ENCODE measurements at regions of chr17 and their contacts with region 1.

Region 1: DNA sequence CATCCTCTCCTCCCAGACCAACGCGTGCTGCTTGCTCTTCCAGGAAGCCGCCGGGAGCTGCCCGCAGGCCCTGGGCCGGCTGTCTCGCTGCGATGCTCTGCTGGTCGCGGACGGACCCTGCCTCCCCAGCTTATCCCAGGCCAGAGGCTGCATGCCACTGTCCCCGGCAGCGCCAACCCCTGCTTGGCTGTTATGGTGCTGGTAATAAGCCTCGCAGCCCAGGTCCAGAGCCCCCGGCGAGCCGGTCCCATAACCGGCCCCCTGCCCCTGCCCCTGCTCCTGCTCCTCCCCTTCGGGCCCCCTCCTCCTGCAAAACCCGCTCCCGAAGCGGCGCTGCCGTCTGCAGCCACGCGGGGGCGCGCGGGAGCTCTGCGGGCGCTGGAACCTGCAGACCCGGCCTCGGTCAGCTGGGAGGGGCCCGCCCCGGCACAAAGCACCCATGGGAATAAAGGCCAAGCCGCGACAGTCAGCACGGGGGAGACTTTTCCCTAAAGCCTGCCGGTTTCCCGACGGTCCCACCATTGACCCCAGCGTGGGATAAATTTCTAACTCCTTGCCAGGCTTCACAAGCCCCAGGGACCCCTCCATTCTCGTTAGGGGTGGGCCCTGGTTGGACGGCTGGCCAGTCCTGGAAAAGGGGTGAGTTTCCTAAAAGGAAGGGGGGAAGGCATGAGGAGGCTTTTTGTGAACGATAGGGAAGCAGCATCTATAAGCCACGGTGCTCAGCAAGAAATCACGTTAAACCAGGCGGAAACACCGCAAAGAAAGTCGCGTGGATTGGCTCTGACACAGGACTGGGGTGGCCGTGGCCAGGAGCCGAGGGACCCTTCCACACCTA is 11.2 kb downstream of the ENPP7 start:
- DNase-seq: peak; percentile 83
- H3K4me3 ChIP-seq: peak overlapping the region; percentile 35
- H3K27ac ChIP-seq: no peak overlapping the region
- H3K4me1 ChIP-seq: peaks cover 12% of the 10 kb centered on the region
- H3K27me3 ChIP-seq: peaks cover 4% of the 10 kb centered on the region
- CTCF ChIP-seq: peak; percentile 98

Region 2: GRCh38 chr17:79400989-79401703 is 340.8 kb before region 1 on chr17:
- CTCF ChIA-PET with region 1: no interaction called
- POLR2A ChIA-PET with region 1: no interaction called
- intact Hi-C with region 1: no loop called
- DNase-seq: peak; percentile 71
- H3K4me3 ChIP-seq: no peak overlapping the region
- H3K27ac ChIP-seq: no peak overlapping the region
- H3K4me1 ChIP-seq: no peaks in the 10 kb centered on the region
- H3K27me3 ChIP-seq: peaks cover 72% of the 10 kb centered on the region
- CTCF ChIP-seq: peak; percentile 89

Region 3: DNA sequence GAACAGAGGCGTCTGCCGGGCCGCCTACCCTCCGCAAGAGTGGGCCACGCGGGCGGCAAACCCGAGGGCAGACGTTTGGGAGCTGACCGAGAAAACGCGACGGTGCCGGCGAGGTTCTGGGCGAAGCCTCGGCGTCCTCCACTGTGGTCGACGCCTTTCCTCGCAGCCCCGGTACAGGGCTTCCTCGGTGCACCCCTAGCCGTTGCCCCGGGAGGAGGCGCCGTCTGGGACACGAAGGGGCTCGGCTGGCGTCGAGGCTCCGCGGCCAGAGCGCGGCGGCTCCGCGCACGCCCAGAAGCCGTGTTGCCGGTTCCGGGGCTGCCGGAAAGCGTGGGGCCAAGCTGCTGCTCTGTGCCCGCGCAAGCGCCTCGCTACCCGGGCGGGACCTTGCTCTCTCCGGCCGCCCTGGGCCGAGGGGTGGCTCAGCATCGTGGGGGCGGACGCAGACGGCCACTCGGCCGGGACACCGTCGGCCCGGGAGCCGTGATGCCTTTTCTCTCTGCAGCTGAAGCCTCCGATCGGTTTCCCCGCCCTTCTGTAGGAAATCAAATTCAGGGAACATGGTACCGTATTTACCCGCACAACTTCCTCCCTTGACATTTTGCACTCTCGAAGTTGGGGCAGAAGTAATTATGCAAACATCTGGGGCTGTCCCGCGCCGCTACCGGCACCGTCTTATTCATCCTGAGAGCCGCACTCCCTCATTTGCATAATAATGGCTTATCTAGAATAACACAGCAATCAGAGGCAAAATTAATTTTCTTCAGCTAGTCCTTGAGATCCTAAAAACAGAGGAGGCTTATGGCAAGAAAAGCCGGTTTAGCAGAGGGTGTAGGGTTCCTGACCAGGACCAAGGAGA is 62.3 kb after region 1 on chr17:
- CTCF ChIA-PET with region 1: no interaction called
- POLR2A ChIA-PET with region 1: no interaction called
- intact Hi-C with region 1: no loop called
- DNase-seq: peak; percentile 67
- H3K4me3 ChIP-seq: peak overlapping the region; percentile 35
- H3K27ac ChIP-seq: peak overlapping the region; percentile 43
- H3K4me1 ChIP-seq: peaks cover 50% of the 10 kb centered on the region
- H3K27me3 ChIP-seq: no peaks in the 10 kb centered on the region
- CTCF ChIP-seq: no peak

Region 4: DNA sequence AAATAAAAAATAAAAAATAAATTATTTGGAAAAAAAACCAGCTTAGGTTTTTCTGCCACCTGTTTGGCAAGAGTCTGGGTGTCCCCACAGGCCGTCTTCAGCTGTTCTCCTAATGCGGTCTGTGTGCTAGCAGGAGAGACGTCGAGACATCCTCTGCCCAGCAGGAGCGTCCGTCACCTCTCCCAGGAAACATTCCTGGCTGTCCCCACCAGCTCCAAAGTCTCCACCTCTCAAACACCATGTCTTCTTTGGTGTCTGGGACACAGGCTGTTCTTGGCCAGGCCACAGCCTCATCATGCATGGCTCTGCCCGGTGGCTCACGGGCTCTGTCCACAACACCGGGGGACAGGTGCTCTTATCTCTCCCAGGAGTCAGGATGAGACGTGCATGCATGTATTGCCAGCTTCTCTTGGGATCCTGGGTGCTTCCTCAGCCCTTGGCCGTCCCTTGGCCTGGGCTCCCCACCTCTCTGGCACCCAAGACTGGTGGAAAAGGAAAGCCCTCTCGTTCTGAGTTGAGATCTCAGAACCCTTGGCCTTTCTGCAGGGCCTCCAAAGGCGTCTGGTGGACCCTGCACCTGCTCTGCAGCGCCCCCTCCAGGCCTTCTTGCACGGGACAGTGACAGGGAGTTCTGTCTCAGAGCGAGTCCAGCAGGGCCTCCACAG is 182.1 kb after region 1 on chr17:
- CTCF ChIA-PET with region 1: interaction called, 6 read pairs
- POLR2A ChIA-PET with region 1: no interaction called
- intact Hi-C with region 1: loop called (anchors 5 kb)
- DNase-seq: peak; percentile 71
- H3K4me3 ChIP-seq: no peak overlapping the region
- H3K27ac ChIP-seq: no peak overlapping the region
- H3K4me1 ChIP-seq: peaks cover 7% of the 10 kb centered on the region
- H3K27me3 ChIP-seq: no peaks in the 10 kb centered on the region
- CTCF ChIP-seq: peak; percentile 89

Measured in A673 (cell line).